HCT116 (cell line): ENCODE measurements at regions of chr1 and their contacts with region 1.

Region 1: GRCh38 chr1:30801771-30802198 is 44.2 kb upstream of the LAPTM5 start:
- DNase-seq: no peak
- ATAC-seq: peak; percentile 73
- H3K4me3 ChIP-seq: peak overlapping the region; percentile 26 to 41; a peak in 2 of 4 replicates
- H3K27ac ChIP-seq: no peak overlapping the region
- H3K4me1 ChIP-seq: peaks cover 23 to 32% of the 10 kb centered on the region in 2 experiments
- H3K27me3 ChIP-seq: peaks cover 4% of the 10 kb centered on the region; the same call in 1 of the 2 replicates
- CTCF ChIP-seq: peak; percentile 93 to 96 (median 95)
- POLR2A ChIP-seq: no peak
- RAD21 ChIP-seq: peak; percentile 100

Region 2: DNA sequence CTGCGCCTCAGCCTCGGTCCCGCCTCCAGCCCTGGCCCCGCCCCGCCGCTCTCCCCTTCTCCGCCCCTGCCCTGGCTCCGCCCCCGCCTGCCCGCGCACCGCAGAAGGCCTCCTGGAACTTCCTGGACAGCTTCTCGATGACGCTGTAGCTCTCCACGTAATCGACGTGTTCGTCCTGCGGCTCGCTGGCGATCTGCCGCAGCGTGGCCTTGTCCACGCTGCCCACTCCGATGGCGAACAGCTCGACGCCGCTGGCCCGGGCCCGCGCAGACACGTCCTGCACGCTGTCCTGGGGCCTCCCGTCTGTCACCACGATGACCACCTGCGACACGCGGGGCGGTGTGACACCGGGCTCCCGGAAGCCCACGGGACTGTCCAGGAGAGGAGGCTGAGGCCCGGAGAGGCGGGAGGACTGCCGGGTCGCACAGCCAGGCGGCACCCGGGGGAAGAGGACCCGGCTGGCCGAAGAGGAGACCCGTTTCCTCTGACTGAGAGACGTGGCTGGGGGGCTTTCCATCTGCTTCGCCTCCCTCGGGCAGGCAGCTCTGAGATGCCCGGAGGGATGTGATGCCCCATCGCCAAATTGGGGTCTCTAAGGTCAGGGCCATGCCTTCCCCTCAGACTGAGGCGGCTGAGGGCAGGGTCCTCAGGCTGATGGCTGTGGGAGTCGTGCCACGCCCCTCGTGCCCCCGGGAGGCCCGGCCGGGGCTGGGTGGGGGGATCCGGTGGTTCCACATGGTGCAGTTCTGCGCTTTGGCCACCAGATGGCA is 83.0 kb before region 1 on chr1:
- CTCF ChIA-PET with region 1: interaction called, 19 read pairs
- POLR2A ChIA-PET with region 1: interaction called, 3 read pairs
- RAD21 ChIA-PET with region 1: no interaction called
- intact Hi-C with region 1: no loop called
- DNase-seq: peak; percentile 91
- ATAC-seq: peak; percentile 81
- H3K4me3 ChIP-seq: peak overlapping the region; percentile 75 to 78
- H3K27ac ChIP-seq: peak overlapping the region; percentile 77
- H3K4me1 ChIP-seq: peaks cover 22 to 34% of the 10 kb centered on the region in 2 experiments
- H3K27me3 ChIP-seq: no peaks in the 10 kb centered on the region
- CTCF ChIP-seq: peak; percentile 83 to 94 (median 84)
- POLR2A ChIP-seq: peak; percentile 65
- RAD21 ChIP-seq: no peak; the same call in 1 of the 2 replicates

Region 3: DNA sequence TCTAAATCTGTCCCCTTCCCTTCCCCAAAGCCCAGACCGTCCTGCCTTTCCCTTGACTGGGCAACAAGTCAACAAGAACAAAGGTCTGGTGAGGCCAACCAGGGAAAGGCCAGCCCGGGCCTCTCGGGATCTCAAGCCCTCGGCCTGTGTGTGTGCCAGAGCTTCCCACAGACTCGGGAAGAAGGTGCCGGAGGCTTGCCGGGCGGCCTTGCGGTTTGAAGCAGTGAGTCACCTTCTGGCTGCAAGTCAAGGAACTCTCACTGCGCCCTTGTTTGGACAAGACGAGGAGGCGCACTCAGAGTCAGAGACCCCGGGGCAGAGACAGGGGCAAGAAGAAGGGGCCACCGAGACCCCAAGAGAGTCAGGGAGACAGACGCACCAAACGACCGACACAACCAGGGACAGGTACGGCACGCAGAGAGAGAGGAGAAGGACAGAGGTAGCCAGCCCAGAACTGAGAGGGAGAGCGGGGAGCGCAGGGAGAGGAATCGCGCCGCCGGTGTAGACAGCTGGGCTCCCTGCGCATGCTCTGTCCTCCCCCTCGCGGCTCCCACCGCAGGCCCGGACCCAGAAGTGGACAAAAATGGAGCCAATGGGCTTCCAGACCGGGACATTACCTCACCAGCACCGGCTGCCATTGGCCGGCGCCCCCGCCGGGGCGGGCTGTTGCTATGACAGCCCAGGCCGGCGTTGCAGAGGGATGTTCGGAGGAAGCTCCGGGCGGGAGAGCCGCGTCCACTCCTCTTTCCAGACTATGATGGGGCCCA is 22.4 kb after region 1 on chr1:
- CTCF ChIA-PET with region 1: interaction called, 10 read pairs
- POLR2A ChIA-PET with region 1: interaction called, 5 read pairs
- RAD21 ChIA-PET with region 1: no interaction called
- intact Hi-C with region 1: no loop called
- DNase-seq: peak; percentile 93
- ATAC-seq: peak; percentile 92
- H3K4me3 ChIP-seq: peak overlapping the region; percentile 46 to 48
- H3K27ac ChIP-seq: peak overlapping the region; percentile 64
- H3K4me1 ChIP-seq: peaks cover 17% of the 10 kb centered on the region in 2 experiments
- H3K27me3 ChIP-seq: peaks cover 9% of the 10 kb centered on the region; the same call in 1 of the 2 replicates
- CTCF ChIP-seq: no peak
- POLR2A ChIP-seq: no peak
- RAD21 ChIP-seq: no peak

Region 4: DNA sequence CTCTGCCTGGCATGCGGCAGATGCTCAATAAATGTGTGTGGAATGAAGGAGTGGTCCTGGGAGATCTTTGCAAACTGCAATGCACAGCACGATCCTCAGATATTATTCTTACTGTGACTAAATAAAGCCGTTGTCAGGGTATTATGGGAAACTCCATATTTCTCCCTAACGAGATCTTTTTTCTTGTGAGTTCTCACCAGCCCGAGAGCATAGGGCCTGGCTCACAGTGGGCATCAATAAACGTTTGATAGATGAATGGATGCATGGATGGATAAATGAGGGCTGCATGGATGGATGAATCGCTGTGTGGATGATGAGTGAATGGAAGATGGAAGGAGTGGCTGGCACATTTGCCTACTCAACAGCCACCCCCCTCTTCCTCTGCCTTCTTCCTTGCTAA is 37.2 kb after region 1 on chr1:
- CTCF ChIA-PET with region 1: no interaction called
- POLR2A ChIA-PET with region 1: no interaction called
- RAD21 ChIA-PET with region 1: no interaction called
- intact Hi-C with region 1: no loop called
- DNase-seq: no peak
- ATAC-seq: no peak
- H3K4me3 ChIP-seq: no peak overlapping the region
- H3K27ac ChIP-seq: no peak overlapping the region
- H3K4me1 ChIP-seq: no peaks in the 10 kb centered on the region
- H3K27me3 ChIP-seq: peaks cover 10% of the 10 kb centered on the region; the same call in 1 of the 2 replicates
- CTCF ChIP-seq: no peak
- POLR2A ChIP-seq: no peak
- RAD21 ChIP-seq: no peak

Region 5: DNA sequence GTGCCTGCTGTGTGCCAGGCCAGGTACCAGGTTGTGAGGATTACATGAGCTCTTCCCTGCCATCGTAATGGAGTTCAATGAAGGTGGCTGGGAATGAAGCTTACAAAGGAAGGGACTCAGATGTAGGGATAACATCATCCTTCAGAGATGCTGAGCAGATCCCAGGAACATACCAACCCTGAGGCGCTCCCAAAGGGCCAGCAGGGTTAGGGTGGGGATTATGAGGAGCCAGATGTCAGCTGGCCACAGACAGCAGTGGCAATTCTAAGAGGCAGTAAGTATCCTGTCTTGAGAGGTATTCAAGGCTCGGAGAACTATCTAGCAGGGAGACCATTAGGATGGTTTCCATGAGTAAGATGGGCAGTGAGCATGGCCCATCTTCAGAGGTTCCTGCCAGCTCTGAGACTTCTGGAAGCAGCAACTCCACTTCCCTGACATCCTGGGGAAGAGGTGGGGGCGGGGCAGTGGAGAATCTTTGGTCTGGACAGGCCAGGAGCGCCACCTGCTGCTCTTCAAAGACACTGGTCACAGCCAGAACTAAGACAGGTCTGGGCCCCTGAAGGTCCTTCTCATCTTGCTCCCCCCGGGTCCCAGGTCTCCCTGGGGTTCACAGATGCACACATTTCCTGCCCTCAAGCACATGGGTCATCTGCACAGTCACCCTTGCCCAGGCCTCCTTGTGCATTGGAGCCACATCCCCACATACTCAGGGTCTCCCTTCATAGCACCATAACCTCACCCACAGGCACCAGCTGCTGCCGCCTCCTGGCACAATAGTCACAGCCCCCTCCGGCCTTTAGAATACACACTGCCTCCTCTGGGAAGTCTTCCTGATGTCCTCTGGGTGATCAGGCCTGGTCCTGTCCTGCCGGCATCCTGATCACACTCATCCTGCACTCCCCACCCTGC is 109.5 kb after region 1 on chr1:
- CTCF ChIA-PET with region 1: interaction called, 242 read pairs
- POLR2A ChIA-PET with region 1: interaction called, 31 read pairs
- RAD21 ChIA-PET with region 1: interaction called, 39 to 69 read pairs
- intact Hi-C with region 1: loop called (anchors 1 kb)
- DNase-seq: peak; percentile 74
- ATAC-seq: peak; percentile 74
- H3K4me3 ChIP-seq: no peak overlapping the region
- H3K27ac ChIP-seq: peak overlapping the region; percentile 83; the same call in 1 of the 2 replicates
- H3K4me1 ChIP-seq: peaks cover 28 to 39% of the 10 kb centered on the region in 2 experiments
- H3K27me3 ChIP-seq: no peaks in the 10 kb centered on the region
- CTCF ChIP-seq: peak; percentile 85 to 98 (median 87)
- POLR2A ChIP-seq: no peak
- RAD21 ChIP-seq: peak; percentile 100

Region 6: GRCh38 chr1:30923597-30923996 is 121.8 kb after region 1 on chr1:
- CTCF ChIA-PET with region 1: interaction called, 14 read pairs
- POLR2A ChIA-PET with region 1: no interaction called
- RAD21 ChIA-PET with region 1: no interaction called
- intact Hi-C with region 1: no loop called
- DNase-seq: no peak
- ATAC-seq: peak; percentile 63; the same call in 1 of the 2 replicates
- H3K4me3 ChIP-seq: no peak overlapping the region
- H3K27ac ChIP-seq: no peak overlapping the region
- H3K4me1 ChIP-seq: no peaks in the 10 kb centered on the region; a peak in 1 of 4 replicates
- H3K27me3 ChIP-seq: no peaks in the 10 kb centered on the region
- CTCF ChIP-seq: no peak
- POLR2A ChIP-seq: no peak
- RAD21 ChIP-seq: no peak

Region 7: GRCh38 chr1:30929135-30929889 is 127.5 kb after region 1 on chr1:
- CTCF ChIA-PET with region 1: interaction called, 14 read pairs
- POLR2A ChIA-PET with region 1: no interaction called
- RAD21 ChIA-PET with region 1: no interaction called
- intact Hi-C with region 1: loop called (anchors 1 kb)
- DNase-seq: no peak
- ATAC-seq: peak; percentile 81
- H3K4me3 ChIP-seq: no peak overlapping the region
- H3K27ac ChIP-seq: no peak overlapping the region
- H3K4me1 ChIP-seq: peaks cover 0 to 8% of the 10 kb centered on the region in 2 experiments; a peak in 1 of 4 replicates
- H3K27me3 ChIP-seq: no peaks in the 10 kb centered on the region
- CTCF ChIP-seq: peak; percentile 66 to 81 (median 72); a peak in 5 of 6 replicates
- POLR2A ChIP-seq: no peak
- RAD21 ChIP-seq: peak; percentile 81